Activated B cell treated with CpG ODN at 0.5 μM for 24 hours (primary cell): ENCODE measurements at regions of chr1 and their contacts with region 1.

Region 1: DNA sequence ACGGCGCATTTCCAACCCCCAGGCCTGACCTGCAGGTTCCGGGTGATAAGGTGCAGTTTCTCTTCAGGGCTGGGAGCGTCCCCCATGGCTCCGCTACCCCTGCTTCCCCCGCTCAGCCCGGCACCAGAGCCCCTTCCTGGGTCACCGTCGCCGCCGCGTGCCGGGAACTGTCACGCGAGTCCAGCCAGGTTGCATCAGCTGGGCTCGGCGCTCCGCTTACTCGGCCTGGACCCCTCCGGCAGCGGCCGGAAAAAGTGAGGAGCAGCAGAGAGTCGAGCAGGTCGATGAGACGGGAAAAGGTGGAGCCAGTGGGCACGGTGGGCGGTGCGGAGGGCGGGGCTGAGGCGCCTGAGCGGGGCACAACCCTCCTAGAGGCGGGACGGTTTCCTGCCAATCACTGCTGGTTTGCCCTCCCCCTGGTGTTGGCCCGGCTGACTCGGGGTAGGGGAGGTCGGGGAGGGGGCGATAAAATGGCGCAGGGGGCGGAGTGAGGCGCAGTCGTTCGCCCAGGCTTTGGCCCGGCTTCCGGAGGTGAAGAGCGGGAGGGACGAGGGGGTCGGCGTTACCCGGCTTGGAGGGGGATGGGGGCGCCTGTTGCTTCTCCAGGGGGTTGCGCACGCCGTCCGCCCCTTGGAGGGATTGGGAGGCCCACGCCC is at the starts of genes S100PBP and YARS1:
- DNase-seq: peak; percentile 100
- ATAC-seq: peak; percentile 91
- H3K4me3 Mint-ChIP-seq: peak within 1 kb of the TSS; percentile 94
- H3K27ac Mint-ChIP-seq: peak within 1 kb of the TSS; percentile 85
- H3K4me1 Mint-ChIP-seq: peaks cover 66% of the 10 kb centered on the region
- H3K27me3 Mint-ChIP-seq: no peaks in the 10 kb centered on the region
- CTCF ChIP-seq: no peak
- total RNA-seq, gene S100PBP: 43.0 and 50.5 TPM in 2 replicates
- total RNA-seq, gene YARS1: 219 and 232 TPM in 2 replicates

Region 2: DNA sequence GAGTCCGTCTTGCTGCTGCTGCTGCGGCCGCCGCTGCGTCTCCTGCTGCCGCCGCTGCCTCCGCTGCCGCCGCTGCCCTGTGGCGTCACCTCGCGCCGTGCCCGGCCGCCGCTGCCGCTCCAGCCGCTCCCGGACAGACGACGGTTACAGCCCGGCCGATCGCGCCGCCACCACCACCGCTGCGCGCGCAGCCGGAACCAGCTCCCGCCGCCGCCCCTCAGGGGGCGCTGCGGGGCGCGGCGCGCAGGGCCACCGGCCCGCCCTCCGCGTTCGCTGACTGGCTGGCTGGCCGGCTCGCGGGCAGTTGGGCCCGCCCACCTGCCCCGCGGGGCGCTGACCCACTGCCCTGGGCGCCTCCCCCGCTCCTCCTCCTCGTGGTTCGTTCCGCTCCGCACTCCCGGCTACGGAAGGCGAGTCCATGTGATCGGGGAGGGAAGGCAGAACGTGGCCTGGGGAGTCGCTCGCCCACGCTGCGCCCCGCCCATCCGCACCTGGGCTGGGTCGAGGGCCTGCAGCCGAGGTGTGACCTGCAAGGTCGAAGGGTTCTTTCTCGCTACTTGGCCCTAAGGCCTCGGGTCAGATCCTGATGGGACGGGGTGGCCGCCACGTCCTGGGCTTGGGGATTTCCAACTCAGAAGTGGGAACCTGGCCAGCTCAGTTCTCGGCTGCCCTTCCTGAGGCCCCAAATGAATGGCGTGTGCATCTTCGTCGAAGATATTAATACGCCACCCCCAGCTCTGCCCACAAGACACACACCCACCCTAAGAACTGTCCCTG is 878.9 kb before region 1 on chr1 and contains the start of gene PTP4A2:
- CTCF ChIA-PET with region 1: no interaction called
- POLR2A ChIA-PET with region 1: no interaction called
- intact Hi-C with region 1: loop called (anchors 5 kb)
- DNase-seq: peak; percentile 88
- ATAC-seq: peak; percentile 78
- H3K4me3 Mint-ChIP-seq: peak within 1 kb of the TSS; percentile 91
- H3K27ac Mint-ChIP-seq: peak within 1 kb of the TSS; percentile 93
- H3K4me1 Mint-ChIP-seq: peaks cover 77% of the 10 kb centered on the region
- H3K27me3 Mint-ChIP-seq: no peaks in the 10 kb centered on the region
- CTCF ChIP-seq: no peak
- total RNA-seq, gene PTP4A2: 249 and 275 TPM in 2 replicates

Region 3: DNA sequence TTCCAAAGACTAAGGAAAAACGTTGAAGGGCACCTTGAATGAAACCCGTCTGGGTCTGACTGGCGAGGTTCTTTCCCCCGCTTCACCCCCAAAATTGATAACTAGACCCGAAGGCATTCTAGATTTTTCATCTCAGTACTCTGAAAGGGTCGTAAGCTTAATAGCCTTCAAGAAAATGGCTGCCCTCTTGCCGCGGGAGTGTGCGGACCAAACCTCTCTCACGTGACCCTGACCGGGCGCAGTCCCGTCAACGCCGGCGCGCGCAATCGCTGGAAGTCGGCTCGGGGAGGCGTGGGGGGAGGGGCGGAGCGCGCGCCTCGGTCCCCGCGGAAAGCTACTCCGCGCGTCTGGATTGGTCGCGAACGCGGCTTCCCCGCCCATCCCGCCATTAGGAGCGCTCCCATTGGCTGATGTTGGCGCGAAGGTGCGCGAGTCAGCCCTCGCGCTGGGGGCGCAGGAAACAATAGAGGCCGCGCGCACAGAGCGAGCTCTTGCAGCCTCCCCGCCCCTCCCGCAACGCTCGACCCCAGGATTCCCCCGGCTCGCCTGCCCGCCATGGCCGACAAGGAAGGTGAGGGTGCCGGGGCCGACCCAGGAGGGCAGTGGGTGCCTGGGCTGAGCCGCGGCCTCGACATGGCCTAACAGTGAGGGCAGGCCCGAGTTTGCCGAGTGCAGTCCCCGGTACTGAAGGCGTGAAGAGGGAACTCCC is 166.4 kb before region 1 on chr1 and contains the start of gene RBBP4:
- CTCF ChIA-PET with region 1: no interaction called
- POLR2A ChIA-PET with region 1: interaction called, 13 read pairs
- intact Hi-C with region 1: loop called (anchors 1 kb)
- DNase-seq: peak; percentile 99
- ATAC-seq: peak; percentile 82
- H3K4me3 Mint-ChIP-seq: peak within 1 kb of the TSS; percentile 97
- H3K27ac Mint-ChIP-seq: peak within 1 kb of the TSS; percentile 100
- H3K4me1 Mint-ChIP-seq: peaks cover 70% of the 10 kb centered on the region
- H3K27me3 Mint-ChIP-seq: no peaks in the 10 kb centered on the region
- CTCF ChIP-seq: no peak
- total RNA-seq, gene RBBP4: 228 and 241 TPM in 2 replicates

Region 4: DNA sequence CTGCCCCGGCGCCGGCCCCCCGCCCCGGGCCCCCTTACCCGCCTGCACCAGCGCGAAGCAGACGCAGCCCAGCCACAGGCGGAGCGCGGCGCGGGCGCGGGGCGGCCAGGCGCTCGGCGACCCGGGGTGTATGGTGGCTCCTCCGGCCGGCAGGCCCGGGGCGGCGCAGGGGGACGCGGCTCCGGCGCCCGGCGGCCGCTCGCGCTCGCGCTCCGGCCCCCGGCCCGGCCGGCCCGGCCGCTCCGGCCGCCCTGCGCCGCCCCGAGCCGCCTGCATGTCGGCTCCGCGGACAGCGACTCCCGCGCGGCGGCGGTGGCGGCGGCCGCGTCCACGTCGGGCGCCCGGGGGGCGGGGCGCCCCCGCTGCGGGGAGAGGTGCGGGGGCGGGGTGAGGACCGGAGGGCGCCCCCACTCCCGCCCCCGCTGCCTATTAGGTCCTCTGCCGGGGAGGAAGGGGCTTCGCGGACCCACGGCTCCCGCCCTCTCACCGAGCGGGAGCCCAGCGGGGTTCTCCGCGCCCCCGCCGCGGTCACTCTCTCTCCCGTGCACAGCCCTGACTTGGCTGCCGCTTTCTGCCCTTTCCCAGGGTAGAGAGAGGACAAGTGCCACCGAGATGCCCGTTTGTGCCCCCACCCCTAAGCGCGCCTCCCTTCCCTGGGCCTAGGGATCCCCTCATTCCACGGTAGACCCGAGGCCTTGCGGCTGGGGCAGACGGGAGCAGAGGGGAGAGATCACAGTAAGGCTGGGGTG is 53.5 kb after region 1 on chr1 and contains the start of gene FNDC5:
- CTCF ChIA-PET with region 1: interaction called, 6 read pairs
- POLR2A ChIA-PET with region 1: interaction called, 3 read pairs
- intact Hi-C with region 1: loop called (anchors 2 kb)
- DNase-seq: no peak
- ATAC-seq: no peak
- H3K4me3 Mint-ChIP-seq: peak within 1 kb of the TSS; percentile 75
- H3K27ac Mint-ChIP-seq: no peak within 1 kb of the TSS
- H3K4me1 Mint-ChIP-seq: peaks cover 34% of the 10 kb centered on the region
- H3K27me3 Mint-ChIP-seq: peaks cover 37% of the 10 kb centered on the region
- CTCF ChIP-seq: no peak
- total RNA-seq, gene FNDC5: 0.55 and 1.4 TPM in 2 replicates

Region 5: GRCh38 chr1:32992489-32993323 is 175.4 kb after region 1 on chr1:
- CTCF ChIA-PET with region 1: no interaction called
- POLR2A ChIA-PET with region 1: interaction called, 3 read pairs
- intact Hi-C with region 1: loop called (anchors 5 kb)
- DNase-seq: peak; percentile 67
- ATAC-seq: peak; percentile 89
- H3K4me3 Mint-ChIP-seq: peak overlapping the region; percentile 76
- H3K27ac Mint-ChIP-seq: peak overlapping the region; percentile 97
- H3K4me1 Mint-ChIP-seq: peaks cover 64% of the 10 kb centered on the region
- H3K27me3 Mint-ChIP-seq: no peaks in the 10 kb centered on the region
- CTCF ChIP-seq: no peak

Region 6: DNA sequence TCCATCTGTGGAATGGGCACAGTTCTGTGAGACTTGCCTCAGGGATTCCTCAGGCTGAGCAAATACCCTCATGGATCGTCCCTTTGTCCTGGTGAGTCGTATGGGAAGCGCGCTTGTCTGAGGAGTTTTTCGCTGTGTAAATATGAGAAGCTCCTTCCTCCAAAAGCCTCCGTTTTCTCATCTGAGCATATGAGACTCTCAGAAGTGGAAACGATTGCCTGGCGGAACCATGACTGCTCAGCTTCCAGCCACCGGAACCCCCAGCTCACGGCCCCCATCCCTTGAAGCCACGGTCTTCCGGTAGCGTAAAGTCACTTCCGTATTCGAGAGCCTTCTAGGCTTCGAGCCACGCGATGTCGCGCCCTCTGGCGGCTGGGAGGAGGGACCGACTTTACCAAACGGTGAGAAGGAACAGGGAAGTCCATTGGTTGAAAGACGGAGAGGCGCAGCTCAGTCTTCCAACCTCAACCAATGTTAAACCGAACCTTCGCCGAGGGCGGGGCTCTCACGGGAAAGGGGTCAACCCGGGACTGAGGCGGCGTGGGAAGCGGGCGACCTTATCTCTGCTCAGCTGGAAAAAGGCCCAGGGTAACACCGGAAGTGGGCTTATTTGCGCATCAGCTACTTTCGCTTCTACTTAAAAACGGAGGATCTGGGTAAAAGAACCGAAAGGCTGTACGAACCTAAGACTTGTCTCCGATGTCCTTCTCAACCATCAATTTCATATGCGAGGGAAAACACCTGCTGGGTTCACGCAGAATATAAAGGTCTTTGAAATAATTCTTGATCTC is 309.9 kb after region 1 on chr1:
- CTCF ChIA-PET with region 1: no interaction called
- POLR2A ChIA-PET with region 1: interaction called, 7 read pairs
- intact Hi-C with region 1: loop called (anchors 1 kb)
- DNase-seq: peak; percentile 93
- ATAC-seq: peak; percentile 98
- H3K4me3 Mint-ChIP-seq: peak overlapping the region; percentile 93
- H3K27ac Mint-ChIP-seq: peak overlapping the region; percentile 92
- H3K4me1 Mint-ChIP-seq: peaks cover 25% of the 10 kb centered on the region
- H3K27me3 Mint-ChIP-seq: no peaks in the 10 kb centered on the region
- CTCF ChIP-seq: no peak

Region 7: DNA sequence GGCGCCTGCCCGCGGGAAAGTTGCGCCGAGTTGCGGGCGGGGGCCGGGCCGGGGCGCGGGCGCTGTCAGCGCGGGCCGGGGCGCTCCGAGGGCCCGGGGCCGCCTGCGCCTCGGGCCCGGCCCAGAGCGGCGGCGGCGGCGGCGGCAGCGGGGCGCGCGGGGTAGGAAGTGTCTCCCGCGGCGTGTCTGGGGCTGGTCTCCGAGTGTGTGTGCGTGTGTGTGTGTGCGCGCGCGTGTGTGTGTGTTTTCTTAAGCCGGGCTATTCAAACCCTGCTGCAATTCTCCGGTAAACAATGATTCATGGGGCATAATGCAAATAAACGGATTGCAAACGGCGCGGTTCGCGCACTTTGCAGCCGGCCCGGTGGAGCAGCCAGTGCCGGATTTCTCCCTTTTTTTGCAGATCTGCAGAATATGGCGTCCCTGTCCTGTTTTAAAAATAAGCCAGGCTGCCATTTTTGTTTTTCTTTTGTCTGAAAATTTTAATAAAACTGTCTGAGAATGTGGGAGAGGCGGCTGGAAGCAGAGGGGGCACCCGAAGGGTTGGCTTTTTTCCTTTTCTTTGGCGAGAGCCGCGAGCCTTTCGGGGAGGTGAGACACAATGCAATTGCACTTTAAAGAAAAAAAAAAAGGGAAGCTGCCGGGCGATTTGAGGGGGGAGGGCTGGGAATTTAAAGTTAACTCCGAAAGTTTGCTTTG is 439.6 kb after region 1 on chr1:
- CTCF ChIA-PET with region 1: no interaction called
- POLR2A ChIA-PET with region 1: no interaction called
- intact Hi-C with region 1: loop called (anchors 5 kb)
- DNase-seq: no peak
- ATAC-seq: peak; percentile 60
- H3K4me3 Mint-ChIP-seq: peak overlapping the region; percentile 97
- H3K27ac Mint-ChIP-seq: peak overlapping the region; percentile 95
- H3K4me1 Mint-ChIP-seq: peaks cover 34% of the 10 kb centered on the region
- H3K27me3 Mint-ChIP-seq: no peaks in the 10 kb centered on the region
- CTCF ChIP-seq: no peak